ENCODE measurements at regions of chr7 and their contacts with region 1.

Region 1: DNA sequence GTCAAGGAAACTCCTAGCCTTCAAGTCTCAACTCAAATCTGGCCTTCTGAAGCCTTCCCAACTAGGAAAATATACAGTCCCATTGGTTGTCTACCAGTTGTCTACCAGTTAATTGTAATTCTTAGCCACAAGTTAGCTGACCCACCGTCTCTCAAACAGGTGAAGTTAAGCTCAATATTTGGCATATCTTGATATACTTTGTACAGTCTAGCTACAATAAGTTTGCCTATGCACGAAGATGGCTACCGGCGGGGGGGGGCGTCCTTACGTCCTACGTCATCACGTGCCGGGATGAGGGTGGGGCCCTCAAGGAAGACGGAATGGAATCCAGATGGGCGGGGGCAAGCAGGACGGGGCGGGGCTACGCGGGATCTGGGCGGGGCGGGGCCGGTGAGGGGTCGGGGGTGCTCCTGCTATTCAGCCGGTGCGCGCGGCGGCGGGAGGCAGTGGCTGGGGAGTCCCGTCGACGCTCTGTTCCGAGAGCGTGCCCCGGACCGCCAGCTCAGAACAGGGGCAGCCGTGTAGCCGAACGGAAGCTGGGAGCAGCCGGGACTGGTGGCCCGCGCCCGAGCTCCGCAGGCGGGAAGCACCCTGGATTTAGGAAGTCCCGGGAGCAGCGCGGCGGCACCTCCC is at the start of gene AHR:
- DNase-seq: peak; percentile 90 to 93 (median 92)
- ATAC-seq: peak; percentile 84 to 95 (median 88)
- H3K4me3 ChIP-seq: peak within 1 kb of the TSS; percentile 77 to 88 (median 86)
- H3K27ac ChIP-seq: peak within 1 kb of the TSS; percentile 88 to 96 (median 96)
- H3K4me1 ChIP-seq: peaks cover 0 to 9% (median 0%) of the 10 kb centered on the region in 4 donors
- H3K27me3 ChIP-seq: no peaks in the 10 kb centered on the region
- CTCF ChIP-seq: no peak
- POLR2A ChIP-seq: peak; percentile 96
- total RNA-seq, gene AHR: 31.2 to 67.9 (median 41.0) TPM

Region 2: GRCh38 chr7:16982640-16983350 is 315.5 kb before region 1 on chr7:
- intact Hi-C with region 1: loop called in 1 of 2 experiments (anchors 10 kb)
- DNase-seq: no peak
- ATAC-seq: peak; percentile 85 to 91 (median 86)
- H3K4me3 ChIP-seq: no peak overlapping the region
- H3K27ac ChIP-seq: peak overlapping the region in 1 of 3 donors; percentile 17
- H3K4me1 ChIP-seq: peaks cover 0 to 10% (median 4%) of the 10 kb centered on the region in 4 donors
- H3K27me3 ChIP-seq: no peaks in the 10 kb centered on the region
- CTCF ChIP-seq: peak; percentile 81 to 93 (median 88)
- POLR2A ChIP-seq: no peak

Region 3: GRCh38 chr7:17530741-17531417 is 232.6 kb after region 1 on chr7:
- intact Hi-C with region 1: loop called in 1 of 2 experiments (anchors 10 kb)
- DNase-seq: no peak
- ATAC-seq: peak; percentile 87 to 92 (median 90)
- H3K4me3 ChIP-seq: peak overlapping the region in 2 of 3 donors; percentile 6 to 17
- H3K27ac ChIP-seq: peak overlapping the region in 2 of 3 donors; percentile 2 to 7
- H3K4me1 ChIP-seq: peaks cover 0 to 18% (median 0%) of the 10 kb centered on the region in 4 donors
- H3K27me3 ChIP-seq: no peaks in the 10 kb centered on the region
- CTCF ChIP-seq: peak; percentile 43 to 58 (median 52)
- POLR2A ChIP-seq: no peak

Region 4: DNA sequence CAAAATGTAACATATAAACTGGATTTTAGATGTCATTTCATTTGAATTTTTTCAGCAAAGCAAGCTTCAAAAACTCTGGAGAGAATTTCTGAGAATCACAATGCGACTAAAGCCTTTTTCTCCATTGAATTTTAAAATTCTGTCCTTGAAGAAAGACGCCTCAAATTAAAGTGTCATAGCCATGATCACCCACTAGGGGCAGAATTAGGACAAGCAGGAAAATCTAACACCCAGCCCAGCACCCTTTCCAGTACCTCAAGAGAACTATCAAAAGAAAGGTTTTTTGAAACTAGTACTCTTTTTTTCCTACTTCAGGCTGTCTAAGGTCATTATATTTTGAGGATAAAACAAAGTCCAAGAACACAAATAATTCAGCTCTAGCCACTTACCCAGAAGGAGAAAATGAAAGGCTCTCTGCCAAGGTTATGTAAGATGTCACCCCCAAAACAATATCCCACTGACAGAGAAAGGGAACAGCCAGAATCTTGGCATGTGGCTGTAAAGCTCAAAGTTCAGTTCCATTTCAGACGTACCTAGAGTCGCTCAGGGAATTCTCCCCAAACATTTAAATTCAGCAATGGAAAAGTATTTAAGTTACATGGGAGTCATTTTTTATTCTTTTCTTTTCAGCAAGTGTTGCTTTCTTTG is 342.5 kb after region 1 on chr7:
- intact Hi-C with region 1: loop called in 1 of 2 experiments (anchors 10 kb)
- DNase-seq: no peak
- ATAC-seq: peak; percentile 70 to 82 (median 76)
- H3K4me3 ChIP-seq: no peak overlapping the region
- H3K27ac ChIP-seq: peak overlapping the region in 2 of 3 donors; percentile 10 to 24
- H3K4me1 ChIP-seq: peaks cover 0 to 8% (median 0%) of the 10 kb centered on the region in 4 donors
- H3K27me3 ChIP-seq: no peaks in the 10 kb centered on the region
- CTCF ChIP-seq: peak; percentile 53 to 74 (median 58)
- POLR2A ChIP-seq: no peak